Activated T-helper 1 cell treated with anti-CD3 and anti-CD28 coated beads, Interleukin-12 subunit alpha, Interleukin-12 subunit beta, Interleukin-2, Interleukin-4 antibody, amounts not matched to agents 30 ng/mL and 10 ng/mL and 1 ng/mL, durations not matched to agents 14 hours and 24 hours and 36 hours (primary cell): ENCODE measurements at regions of chr19 and their contacts with region 1.

Region 1: GRCh38 chr19:41951686-41952172 is 7.4 kb downstream of the RABAC1 start:
- DNase-seq: peak; percentile 75
- H3K4me3 Mint-ChIP-seq: no peak overlapping the region
- H3K27ac Mint-ChIP-seq: no peak overlapping the region
- H3K4me1 Mint-ChIP-seq: peaks cover 26% of the 10 kb centered on the region
- H3K27me3 Mint-ChIP-seq: no peaks in the 10 kb centered on the region

Region 2: GRCh38 chr19:41792513-41793412 is 159.0 kb before region 1 on chr19:
- intact Hi-C with region 1: loop called (anchors 1 kb)
- DNase-seq: peak; percentile 45
- H3K4me3 Mint-ChIP-seq: no peak overlapping the region
- H3K27ac Mint-ChIP-seq: no peak overlapping the region
- H3K4me1 Mint-ChIP-seq: peaks cover 14% of the 10 kb centered on the region
- H3K27me3 Mint-ChIP-seq: peaks cover 51% of the 10 kb centered on the region

Region 3: GRCh38 chr19:41872775-41873647 is 78.7 kb before region 1 on chr19:
- intact Hi-C with region 1: loop called (anchors 1 kb)
- DNase-seq: peak; percentile 49
- H3K4me3 Mint-ChIP-seq: peak overlapping the region; percentile 29
- H3K27ac Mint-ChIP-seq: peak overlapping the region; percentile 88
- H3K4me1 Mint-ChIP-seq: peaks cover 84% of the 10 kb centered on the region
- H3K27me3 Mint-ChIP-seq: no peaks in the 10 kb centered on the region

Region 4: DNA sequence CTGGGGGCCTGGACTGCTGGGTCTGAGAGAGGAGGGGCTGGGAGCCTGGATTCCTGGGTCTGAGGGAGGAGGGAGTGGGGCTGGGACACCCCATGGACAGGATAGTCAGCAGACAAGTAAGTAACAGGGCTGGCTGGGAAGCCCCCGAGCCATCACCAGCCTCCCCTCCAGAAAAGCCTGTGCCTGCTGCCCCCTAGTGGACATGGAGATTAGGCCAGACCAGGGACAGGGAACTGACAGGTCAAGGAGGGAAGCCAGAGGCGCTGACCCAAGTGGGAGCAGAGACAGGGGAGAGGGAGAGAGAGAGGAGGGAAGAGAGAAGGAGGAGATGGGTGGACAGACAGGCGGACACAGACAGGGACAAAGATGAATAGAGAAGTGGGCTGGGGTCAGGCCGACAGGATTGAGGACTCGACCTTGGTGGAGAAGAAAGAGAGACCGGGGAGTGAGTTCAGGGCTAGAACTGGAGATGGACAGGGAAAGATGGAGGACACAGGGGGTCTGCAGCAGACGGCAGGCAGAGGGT is 16.8 kb before region 1 on chr19:
- intact Hi-C with region 1: loop called (anchors 1 kb)
- DNase-seq: peak; percentile 61
- H3K4me3 Mint-ChIP-seq: peak overlapping the region; percentile 13
- H3K27ac Mint-ChIP-seq: peak overlapping the region; percentile 77
- H3K4me1 Mint-ChIP-seq: peaks cover 44% of the 10 kb centered on the region
- H3K27me3 Mint-ChIP-seq: peaks cover 24% of the 10 kb centered on the region